Breast epithelium (tissue), 4 donors: ENCODE measurements at regions of chr4 and their contacts with region 1.

Region 1: GRCh38 chr4:185881427-185881826 is 69.4 kb upstream of the SORBS2 start:
- DNase-seq: no peak
- H3K4me3 ChIP-seq: no peak overlapping the region
- H3K27ac ChIP-seq: no peak overlapping the region
- H3K4me1 ChIP-seq: no peaks in the 10 kb centered on the region
- H3K27me3 ChIP-seq: no peaks in the 10 kb centered on the region
- CTCF ChIP-seq: no peak
- POLR2A ChIP-seq: no peak

Region 2: GRCh38 chr4:185925910-185926360 is 44.5 kb after region 1 on chr4:
- intact Hi-C with region 1: loop called (anchors 5 kb)
- DNase-seq: no peak
- H3K4me3 ChIP-seq: no peak overlapping the region
- H3K27ac ChIP-seq: no peak overlapping the region
- H3K4me1 ChIP-seq: no peaks in the 10 kb centered on the region
- H3K27me3 ChIP-seq: no peaks in the 10 kb centered on the region
- CTCF ChIP-seq: no peak
- POLR2A ChIP-seq: no peak

Region 3: DNA sequence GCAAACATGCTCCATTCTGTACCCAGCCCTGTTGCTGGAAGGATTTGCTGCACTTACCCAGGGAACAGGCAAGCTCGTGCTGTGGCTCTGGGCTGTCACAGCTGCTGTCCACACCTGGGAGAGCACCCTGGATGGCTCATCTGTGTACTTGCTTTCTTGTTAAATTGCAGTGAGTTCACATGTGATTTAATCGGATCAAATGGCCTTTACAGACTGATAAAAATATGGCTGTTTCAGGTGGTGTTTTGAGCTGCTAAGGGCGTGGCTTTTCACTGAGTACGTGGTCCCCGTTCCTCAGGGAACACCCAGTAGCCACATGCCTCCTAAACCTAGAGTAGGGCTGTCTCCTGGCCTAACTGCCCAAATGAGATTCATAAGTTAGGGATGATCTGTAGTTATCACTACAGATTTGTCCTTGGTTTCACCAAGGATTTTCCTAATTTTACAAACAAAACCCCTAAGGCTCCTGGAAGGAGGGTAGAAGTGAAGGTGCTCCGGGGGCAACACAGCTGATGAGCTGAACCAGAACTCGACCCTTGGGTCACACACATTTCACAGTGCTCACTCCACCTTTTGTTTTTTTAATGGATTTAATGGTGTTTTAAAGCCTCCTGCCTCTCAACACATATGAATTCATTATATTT is 359.5 kb after region 1 on chr4:
- intact Hi-C with region 1: no loop called
- DNase-seq: no peak
- H3K4me3 ChIP-seq: no peak overlapping the region
- H3K27ac ChIP-seq: no peak overlapping the region
- H3K4me1 ChIP-seq: no peaks in the 10 kb centered on the region
- H3K27me3 ChIP-seq: no peaks in the 10 kb centered on the region
- CTCF ChIP-seq: no peak
- POLR2A ChIP-seq: no peak